ENCODE measurements at regions of chr2 and their contacts with region 1.

Region 1: GRCh38 chr2:162123806-162124758 is 28.0 kb downstream of the GCG start:
- DNase-seq: no peak
- ATAC-seq: peak; percentile 26 to 50
- H3K4me3 ChIP-seq: no peak overlapping the region
- H3K27ac ChIP-seq: no peak overlapping the region
- H3K4me1 ChIP-seq: peaks cover 2% of the 10 kb centered on the region
- H3K27me3 ChIP-seq: no peaks in the 10 kb centered on the region

Region 2: DNA sequence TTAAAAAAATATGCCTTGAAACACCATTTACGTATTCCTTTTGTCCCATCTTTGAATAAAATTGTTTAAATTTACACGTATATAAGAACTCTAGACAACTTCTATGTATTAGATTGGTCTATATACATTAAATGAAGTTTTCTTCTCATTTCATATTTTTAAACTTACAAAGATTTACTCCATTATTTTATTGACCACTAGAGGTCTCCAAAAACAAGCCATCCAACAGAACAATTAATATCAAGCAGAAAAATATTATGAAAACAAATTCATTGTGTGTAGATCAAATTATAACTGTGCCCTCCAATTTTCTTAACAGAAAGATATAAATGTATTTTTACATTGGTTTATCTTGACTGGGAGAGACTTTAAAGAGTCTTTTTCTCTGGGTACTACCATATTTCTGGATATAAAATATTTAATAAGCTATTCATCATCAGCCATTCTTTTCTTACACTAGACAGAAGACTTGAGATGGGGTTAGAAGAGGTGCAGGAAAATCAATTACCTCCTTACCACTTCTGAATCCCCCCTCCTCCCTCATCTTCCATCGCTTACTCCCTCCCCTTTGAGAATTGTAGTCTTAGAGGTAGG is 116.5 kb before region 1 on chr2:
- intact Hi-C with region 1: loop called (anchors 2 to 5 kb)
- DNase-seq: no peak
- ATAC-seq: no peak
- H3K4me3 ChIP-seq: no peak overlapping the region
- H3K27ac ChIP-seq: no peak overlapping the region
- H3K4me1 ChIP-seq: no peaks in the 10 kb centered on the region
- H3K27me3 ChIP-seq: no peaks in the 10 kb centered on the region

Region 3: GRCh38 chr2:162261032-162261945 is 137.2 kb after region 1 on chr2:
- intact Hi-C with region 1: no loop called
- DNase-seq: peak; percentile 57 to 87 (median 72)
- ATAC-seq: peak; percentile 89 to 96
- H3K4me3 ChIP-seq: no peak overlapping the region
- H3K27ac ChIP-seq: peak overlapping the region; percentile 75
- H3K4me1 ChIP-seq: peaks cover 3% of the 10 kb centered on the region
- H3K27me3 ChIP-seq: no peaks in the 10 kb centered on the region

Region 4: DNA sequence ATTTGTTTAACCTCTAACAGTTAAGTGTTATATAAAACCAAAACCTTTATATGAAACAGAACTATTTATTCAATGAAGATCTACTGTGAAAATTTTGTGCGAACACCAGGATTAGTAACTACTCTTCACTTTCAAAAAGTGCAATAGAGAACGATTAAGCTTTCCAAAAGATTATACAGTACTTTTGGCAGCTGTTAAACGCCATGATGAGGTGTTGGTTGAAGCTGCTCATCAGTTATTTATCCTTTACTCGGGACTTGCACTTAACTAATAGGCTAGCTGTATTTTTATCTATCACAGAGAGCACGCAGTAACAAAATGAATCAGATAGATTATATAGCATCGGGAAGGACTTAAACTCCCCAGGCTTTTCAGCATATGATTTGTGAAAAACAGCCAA is 333.4 kb after region 1 on chr2:
- intact Hi-C with region 1: no loop called
- DNase-seq: no peak
- ATAC-seq: no peak
- H3K4me3 ChIP-seq: no peak overlapping the region
- H3K27ac ChIP-seq: no peak overlapping the region
- H3K4me1 ChIP-seq: no peaks in the 10 kb centered on the region
- H3K27me3 ChIP-seq: no peaks in the 10 kb centered on the region

Measured in right cardiac atrium (tissue), 5 donors.